ENCODE measurements at regions of chr15 and their contacts with region 1.

Region 1: DNA sequence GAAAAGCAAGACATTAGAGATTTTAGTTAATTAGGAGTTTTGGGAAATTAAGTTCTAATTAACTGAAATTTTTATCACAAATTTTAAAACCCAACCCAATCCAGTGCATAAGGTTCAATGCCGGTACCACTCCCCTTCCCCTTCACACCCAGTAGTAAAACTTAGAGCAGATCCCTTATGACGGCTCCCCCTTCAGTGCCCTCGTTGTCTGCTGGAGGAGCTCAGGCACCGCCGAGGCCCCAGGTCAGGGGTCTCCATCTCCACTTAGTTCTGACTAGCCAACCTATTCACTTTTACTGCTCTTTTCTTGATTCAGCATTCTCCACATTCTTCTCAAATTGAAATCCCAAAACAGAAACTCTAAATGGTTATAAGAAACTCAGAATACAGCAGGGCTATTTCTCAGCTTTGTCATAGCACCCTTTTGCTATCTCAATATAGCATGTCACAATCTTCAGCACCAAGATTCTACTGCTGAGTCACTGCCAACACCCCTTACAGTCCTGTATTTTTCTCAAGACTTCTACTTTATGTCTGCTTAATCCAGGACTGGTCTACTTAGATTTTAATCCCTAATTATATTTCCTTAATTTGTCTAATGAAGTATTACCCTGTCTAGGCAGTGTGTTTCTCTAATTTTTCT is 39.8 kb downstream of the TUBGCP4 start:
- DNase-seq: no peak
- ATAC-seq: no peak
- H3K4me3 ChIP-seq: no peak overlapping the region
- H3K27ac ChIP-seq: no peak overlapping the region
- H3K4me1 ChIP-seq: peaks cover 0 to 9% (median 0%) of the 10 kb centered on the region in 9 donors
- H3K27me3 ChIP-seq: no peaks in the 10 kb centered on the region
- CTCF ChIP-seq: no peak

Region 2: DNA sequence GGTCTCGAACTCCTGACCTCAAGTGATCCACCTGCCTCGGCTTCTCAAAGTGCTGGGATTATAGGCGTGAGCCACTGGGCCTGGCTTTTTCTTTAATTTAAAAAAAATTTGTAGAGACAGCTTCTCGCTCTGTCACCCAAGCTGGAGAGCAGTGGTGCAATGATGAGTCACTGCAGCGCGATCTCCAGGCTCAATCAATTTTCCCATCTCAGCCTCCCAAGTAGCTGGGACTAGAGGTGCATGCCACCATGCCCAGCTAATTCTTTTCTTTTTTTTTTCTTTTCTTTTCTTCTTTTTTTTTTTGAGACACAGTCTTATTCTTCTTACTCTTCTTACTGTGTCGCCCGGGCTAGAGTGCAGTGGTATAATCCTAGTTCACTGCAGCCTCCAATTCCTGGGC is 20.0 kb before region 1 on chr15:
- intact Hi-C with region 1: loop called in 1 of 10 experiments (anchors 2 kb)
- DNase-seq: no peak
- ATAC-seq: no peak
- H3K4me3 ChIP-seq: no peak overlapping the region
- H3K27ac ChIP-seq: no peak overlapping the region
- H3K4me1 ChIP-seq: no peaks in the 10 kb centered on the region
- H3K27me3 ChIP-seq: no peaks in the 10 kb centered on the region
- CTCF ChIP-seq: no peak

Region 3: GRCh38 chr15:43440721-43441281 is 30.1 kb after region 1 on chr15:
- intact Hi-C with region 1: no loop called
- DNase-seq: peak in 1 of 2 donors; percentile 34
- ATAC-seq: peak; percentile 86 to 97 (median 93)
- H3K4me3 ChIP-seq: no peak overlapping the region
- H3K27ac ChIP-seq: peak overlapping the region in 8 of 10 donors; percentile 2 to 73 (median 60)
- H3K4me1 ChIP-seq: peaks cover 0 to 14% (median 9%) of the 10 kb centered on the region in 9 donors
- H3K27me3 ChIP-seq: no peaks in the 10 kb centered on the region
- CTCF ChIP-seq: peak in 8 of 9 donors; percentile 9 to 59 (median 47)